Gastrocnemius medialis (tissue), 4 donors: ENCODE measurements at regions of chr5 and their contacts with region 1.

Region 1: DNA sequence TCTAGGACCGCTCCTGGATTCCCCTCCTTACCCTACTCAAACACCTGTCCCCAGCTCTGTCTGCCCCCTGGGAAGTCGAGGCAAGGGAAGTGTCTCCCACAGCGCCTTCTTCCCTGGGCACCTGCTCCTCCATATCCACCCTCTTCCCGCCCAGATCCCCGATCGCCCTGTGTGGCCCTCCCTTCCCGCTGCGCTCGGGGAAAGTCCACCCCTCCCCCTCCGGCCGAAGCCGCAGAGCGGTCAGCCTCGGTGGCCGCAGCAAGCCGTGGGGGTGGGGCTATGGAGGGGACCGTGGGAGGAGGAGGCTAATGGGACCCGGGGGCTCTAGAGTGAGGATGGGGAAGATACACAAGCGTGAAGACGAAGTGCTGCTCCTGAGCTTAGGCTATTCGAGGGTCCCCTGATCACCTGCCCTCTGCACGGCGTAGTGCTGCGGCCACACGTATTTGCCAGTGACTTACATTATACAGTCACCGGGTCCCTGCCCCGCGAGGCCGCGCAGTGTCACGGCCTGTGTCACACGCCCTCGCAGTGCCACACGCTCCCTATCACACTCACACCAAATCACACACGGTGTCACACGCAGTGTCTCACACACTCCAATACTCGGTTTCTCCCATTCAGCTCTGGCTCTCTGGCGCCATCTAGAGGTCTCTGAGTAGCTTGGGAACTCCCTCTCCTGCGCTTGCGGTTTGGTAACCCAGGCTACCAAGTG is 658 bp upstream of the PCDH1 start:
- DNase-seq: peak; percentile 78 to 81
- ATAC-seq: peak; percentile 90 to 92
- H3K4me3 ChIP-seq: peak overlapping the region; percentile 55 to 93 (median 72)
- H3K27ac ChIP-seq: peak overlapping the region; percentile 57 to 82 (median 74)
- H3K4me1 ChIP-seq: peaks cover 28 to 30% of the 10 kb centered on the region in 2 donors
- H3K27me3 ChIP-seq: peaks cover 40 to 55% (median 50%) of the 10 kb centered on the region in 3 donors
- CTCF ChIP-seq: peak; percentile 86 to 98 (median 95)
- POLR2A ChIP-seq: no peak

Region 2: GRCh38 chr5:141701360-141702119 is 177.3 kb before region 1 on chr5:
- in situ Hi-C with region 1: loop called (anchors 5 to 10 kb)
- intact Hi-C with region 1: loop called (anchors 1 kb)
- DNase-seq: no peak
- ATAC-seq: no peak
- H3K4me3 ChIP-seq: peak overlapping the region in 2 of 4 donors; percentile 70 to 78
- H3K27ac ChIP-seq: no peak overlapping the region
- H3K4me1 ChIP-seq: peaks cover 10 to 14% of the 10 kb centered on the region in 2 donors
- H3K27me3 ChIP-seq: peaks cover 38 to 53% (median 43%) of the 10 kb centered on the region in 3 donors
- CTCF ChIP-seq: no peak
- POLR2A ChIP-seq: no peak

Region 3: DNA sequence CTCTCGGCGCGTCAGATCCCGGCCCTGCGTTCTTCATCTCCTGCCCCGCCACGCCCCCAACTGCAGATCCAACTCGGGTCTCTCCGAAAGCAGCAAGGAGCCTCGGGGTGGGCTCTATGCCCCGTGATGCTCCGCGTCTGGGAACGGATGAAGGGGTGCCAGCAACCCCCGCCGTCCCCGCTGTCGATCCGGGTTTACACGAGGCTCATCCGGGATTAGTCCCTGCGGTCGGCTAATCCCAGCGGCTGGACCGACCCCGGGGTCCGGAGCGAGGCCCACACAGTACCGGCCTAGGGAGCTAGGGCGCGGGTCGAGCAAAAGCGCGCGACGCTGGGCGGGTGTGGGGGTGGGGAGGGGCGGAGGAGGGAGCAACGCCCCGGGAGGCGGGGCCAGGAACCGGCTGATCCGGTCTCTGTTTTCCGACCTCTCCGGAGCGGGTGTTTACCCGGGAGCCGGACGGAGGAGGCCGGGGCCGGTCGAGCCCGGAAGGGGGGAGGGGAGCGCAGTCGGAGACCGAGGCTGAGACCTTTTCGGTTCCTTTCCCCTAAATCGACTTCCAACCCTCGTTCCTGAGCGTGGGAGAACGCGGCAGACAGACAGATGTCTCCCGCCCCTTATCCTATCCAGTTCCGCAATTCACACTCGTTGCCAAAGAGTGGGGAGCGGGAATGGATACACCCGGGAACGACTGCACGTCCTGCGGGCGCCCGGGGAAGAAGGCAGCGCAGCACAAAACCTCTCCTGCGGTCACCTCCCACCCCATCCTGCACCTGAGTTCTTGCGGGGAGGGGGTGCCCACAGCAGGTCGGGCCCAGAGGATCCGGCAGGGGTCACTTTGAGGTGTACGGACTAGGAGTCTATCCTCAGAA is 29.3 kb before region 1 on chr5:
- in situ Hi-C with region 1: no loop called
- intact Hi-C with region 1: loop called (anchors 2 kb)
- DNase-seq: peak; percentile 57 to 65
- ATAC-seq: peak; percentile 80 to 87
- H3K4me3 ChIP-seq: peak overlapping the region; percentile 61 to 74 (median 66)
- H3K27ac ChIP-seq: peak overlapping the region; percentile 77 to 90 (median 82)
- H3K4me1 ChIP-seq: peaks cover 5 to 25% of the 10 kb centered on the region in 2 donors
- H3K27me3 ChIP-seq: peaks cover 9 to 26% (median 13%) of the 10 kb centered on the region in 3 donors
- CTCF ChIP-seq: peak in 3 of 5 experiments; percentile 22 to 38 (median 35)
- POLR2A ChIP-seq: peak; percentile 72 to 78

Region 4: DNA sequence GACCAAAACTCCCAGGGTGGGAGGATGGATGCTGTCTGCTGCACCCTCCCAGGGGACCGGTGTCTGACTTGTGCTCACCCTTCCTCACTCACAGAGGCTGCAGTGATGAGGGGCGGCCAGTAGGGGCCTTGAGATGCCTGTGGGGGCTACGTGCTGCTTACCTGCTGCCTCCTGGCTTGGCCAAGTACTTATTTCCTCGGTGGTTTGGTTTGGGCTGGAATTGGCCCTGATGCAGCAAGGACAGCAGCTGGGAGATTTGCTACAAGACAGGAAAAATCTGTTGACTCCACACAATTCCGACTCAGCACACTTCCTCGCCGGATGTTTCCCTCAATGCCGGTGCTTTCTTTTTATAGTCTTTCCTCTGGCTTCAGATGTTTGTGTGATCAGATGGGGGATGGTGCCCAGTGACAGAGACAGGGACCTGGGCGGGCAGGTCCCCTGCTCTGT is 72.5 kb after region 1 on chr5:
- in situ Hi-C with region 1: loop called in 1 of 4 experiments (anchors 10 kb)
- intact Hi-C with region 1: no loop called
- DNase-seq: no peak
- ATAC-seq: peak in 1 of 2 donors; percentile 46
- H3K4me3 ChIP-seq: no peak overlapping the region
- H3K27ac ChIP-seq: peak overlapping the region in 3 of 4 donors; percentile 41 to 52 (median 46)
- H3K4me1 ChIP-seq: peaks cover 7 to 11% of the 10 kb centered on the region in 2 donors
- H3K27me3 ChIP-seq: peaks cover 0 to 5% (median 5%) of the 10 kb centered on the region in 3 donors
- CTCF ChIP-seq: peak in 2 of 5 experiments; percentile 13 to 27
- POLR2A ChIP-seq: no peak